ENCODE measurements at regions of chr5 and their contacts with region 1.

Region 1: GRCh38 chr5:172106511-172107356 is 81.3 kb downstream of the STK10 start:
- DNase-seq: peak; percentile 89

Region 2: DNA sequence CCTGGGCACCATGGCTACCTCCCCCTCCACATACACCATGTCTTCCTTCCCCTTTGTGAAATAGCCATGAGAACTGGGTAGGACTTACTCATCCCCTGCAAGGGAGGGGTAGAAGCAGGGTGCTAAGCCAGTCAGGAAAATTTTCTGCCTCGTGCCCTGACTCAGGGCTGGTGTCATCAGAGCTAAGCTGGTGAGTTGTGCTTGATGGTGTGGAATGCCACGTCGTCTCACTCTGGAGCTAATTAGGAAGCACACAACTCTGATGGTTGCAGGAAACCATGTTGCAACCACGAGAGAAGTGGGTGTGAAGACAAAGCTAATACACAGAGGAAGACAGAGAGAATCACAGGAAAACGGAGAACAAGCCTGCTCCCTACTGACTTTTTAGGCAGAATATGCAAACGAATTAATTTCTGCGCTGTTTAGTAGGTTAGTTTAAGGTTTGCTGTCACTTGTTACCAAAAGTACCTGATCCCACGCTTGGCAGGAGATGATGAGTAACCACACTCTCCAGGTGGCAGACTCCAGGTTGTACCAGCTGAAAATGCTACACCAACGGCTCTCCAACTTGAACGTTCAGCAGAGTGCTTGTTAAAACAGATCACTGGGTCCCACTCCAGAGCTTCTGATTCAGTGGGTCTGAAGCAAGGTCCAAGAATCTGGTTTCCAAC is 26.8 kb after region 1 on chr5:
- intact Hi-C with region 1: no loop called
- DNase-seq: peak; percentile 84

Region 3: GRCh38 chr5:172188033-172188892 is 81.5 kb after region 1 on chr5 and contains the start of gene STK10:
- intact Hi-C with region 1: loop called (anchors 2 to 5 kb)
- DNase-seq: peak; percentile 97
- total RNA-seq, gene STK10: 25.2 to 33.6 TPM

Region 4: GRCh38 chr5:172283020-172283861 is 176.5 kb after region 1 on chr5 and contains the start of gene UBTD2:
- intact Hi-C with region 1: loop called (anchors 10 kb)
- DNase-seq: peak; percentile 95
- total RNA-seq, gene UBTD2: 18.7 to 24.0 TPM